IMR-90 (cell line): ENCODE measurements at regions of chr2 and their contacts with region 1.

Region 1: GRCh38 chr2:150925611-150926010 is 336.1 kb downstream of the RBM43 start:
- DNase-seq: no peak
- ATAC-seq: no peak
- H3K4me3 ChIP-seq: no peak overlapping the region
- H3K27ac ChIP-seq: no peak overlapping the region
- H3K4me1 ChIP-seq: no peaks in the 10 kb centered on the region; the same call in 1 of the 2 replicates
- H3K27me3 ChIP-seq: no peaks in the 10 kb centered on the region
- CTCF ChIP-seq: no peak
- POLR2A ChIP-seq: no peak
- RAD21 ChIP-seq: no peak

Region 2: DNA sequence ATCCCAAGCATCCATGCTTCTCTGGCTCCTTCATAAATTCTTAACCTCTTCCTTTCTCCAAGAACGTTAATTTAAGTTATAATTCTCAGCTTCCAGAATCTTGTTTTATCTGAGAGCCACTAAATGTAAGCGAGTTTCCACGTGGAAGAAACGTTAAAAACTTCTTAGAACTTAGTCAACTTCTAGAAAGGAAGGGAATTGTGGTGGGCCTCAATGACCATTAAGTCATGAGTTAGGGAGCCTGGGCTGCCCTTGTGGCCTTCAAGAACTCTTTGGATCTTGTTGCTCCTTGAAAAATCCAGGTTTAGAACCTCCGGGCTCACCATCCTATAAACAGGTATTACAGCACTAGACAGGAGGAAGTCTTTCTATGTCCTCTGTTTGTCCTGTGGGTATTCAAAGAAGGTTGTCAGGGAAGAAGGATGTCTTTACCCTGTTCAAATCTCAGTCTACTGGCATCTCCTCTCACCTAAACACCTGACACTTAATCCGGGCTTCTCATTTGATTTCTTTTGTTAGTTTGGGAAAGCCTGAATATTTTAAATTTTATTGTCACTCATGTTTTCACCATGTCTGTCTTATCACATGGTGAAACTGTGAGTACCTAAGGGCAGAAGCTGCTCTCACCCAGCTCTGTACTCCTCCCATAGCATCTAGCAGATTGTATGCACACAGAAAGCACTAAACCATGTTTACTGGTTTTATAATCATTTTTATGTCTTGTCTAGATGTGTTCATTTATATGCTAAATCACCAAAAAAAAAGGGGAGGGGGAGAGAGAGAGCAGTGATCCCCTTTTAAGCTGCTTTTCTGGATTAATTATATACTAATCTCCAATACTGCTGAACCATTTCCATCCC is 444.4 kb before region 1 on chr2:
- CTCF ChIA-PET with region 1: no interaction called
- POLR2A ChIA-PET with region 1: interaction called, 11 read pairs
- dilution Hi-C with region 1: no loop called
- in situ Hi-C with region 1: no loop called
- intact Hi-C with region 1: no loop called
- DNase-seq: peak; percentile 39
- ATAC-seq: no peak; the same call in 1 of the 2 replicates
- H3K4me3 ChIP-seq: peak overlapping the region; percentile 38; the same call in 1 of the 2 replicates
- H3K27ac ChIP-seq: peak overlapping the region; percentile 55; the same call in 1 of the 2 replicates
- H3K4me1 ChIP-seq: peaks cover 4% of the 10 kb centered on the region; the same call in 1 of the 2 replicates
- H3K27me3 ChIP-seq: no peaks in the 10 kb centered on the region
- CTCF ChIP-seq: no peak
- POLR2A ChIP-seq: peak; percentile 22
- RAD21 ChIP-seq: no peak

Region 3: GRCh38 chr2:150601280-150602038 is 324.2 kb before region 1 on chr2:
- CTCF ChIA-PET with region 1: no interaction called
- POLR2A ChIA-PET with region 1: no interaction called
- dilution Hi-C with region 1: no loop called
- in situ Hi-C with region 1: no loop called
- intact Hi-C with region 1: no loop called
- DNase-seq: peak; percentile 81
- ATAC-seq: peak; percentile 94
- H3K4me3 ChIP-seq: no peak overlapping the region
- H3K27ac ChIP-seq: peak overlapping the region; percentile 90
- H3K4me1 ChIP-seq: peaks cover 9% of the 10 kb centered on the region
- H3K27me3 ChIP-seq: no peaks in the 10 kb centered on the region
- CTCF ChIP-seq: no peak
- POLR2A ChIP-seq: no peak
- RAD21 ChIP-seq: no peak

Region 4: DNA sequence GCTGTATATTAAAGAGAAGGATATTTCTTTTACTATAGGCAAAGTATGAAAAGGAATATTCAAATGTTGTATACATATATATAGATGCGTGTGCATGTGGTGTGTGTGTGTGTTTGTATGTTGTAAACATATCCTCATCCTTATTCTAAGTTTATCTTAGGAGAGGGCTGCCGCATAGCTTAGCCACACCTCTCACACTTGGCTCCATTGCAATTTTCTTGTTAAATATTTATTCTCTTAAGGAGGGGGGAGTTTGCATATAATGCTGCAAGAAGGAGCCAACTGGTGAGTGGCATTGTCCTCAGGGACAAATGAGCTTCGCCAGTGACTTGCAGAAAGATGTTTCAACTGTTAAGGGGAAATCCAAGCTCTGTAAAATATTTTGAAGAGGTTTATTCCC is 78.0 kb before region 1 on chr2:
- CTCF ChIA-PET with region 1: no interaction called
- POLR2A ChIA-PET with region 1: no interaction called
- dilution Hi-C with region 1: no loop called
- in situ Hi-C with region 1: no loop called
- intact Hi-C with region 1: no loop called
- DNase-seq: no peak
- ATAC-seq: peak; percentile 63
- H3K4me3 ChIP-seq: no peak overlapping the region
- H3K27ac ChIP-seq: no peak overlapping the region
- H3K4me1 ChIP-seq: no peaks in the 10 kb centered on the region
- H3K27me3 ChIP-seq: no peaks in the 10 kb centered on the region
- CTCF ChIP-seq: no peak
- POLR2A ChIP-seq: no peak
- RAD21 ChIP-seq: no peak

Region 5: GRCh38 chr2:151498178-151498577 is 572.6 kb after region 1 on chr2:
- CTCF ChIA-PET with region 1: no interaction called
- POLR2A ChIA-PET with region 1: no interaction called
- dilution Hi-C with region 1: no loop called
- in situ Hi-C with region 1: no loop called
- intact Hi-C with region 1: no loop called
- DNase-seq: no peak
- ATAC-seq: no peak
- H3K4me3 ChIP-seq: no peak overlapping the region
- H3K27ac ChIP-seq: no peak overlapping the region
- H3K4me1 ChIP-seq: no peaks in the 10 kb centered on the region
- H3K27me3 ChIP-seq: no peaks in the 10 kb centered on the region
- CTCF ChIP-seq: no peak
- POLR2A ChIP-seq: no peak
- RAD21 ChIP-seq: no peak